Psoas muscle (tissue), 8 donors: ENCODE measurements at regions of chr13 and their contacts with region 1.

Region 1: DNA sequence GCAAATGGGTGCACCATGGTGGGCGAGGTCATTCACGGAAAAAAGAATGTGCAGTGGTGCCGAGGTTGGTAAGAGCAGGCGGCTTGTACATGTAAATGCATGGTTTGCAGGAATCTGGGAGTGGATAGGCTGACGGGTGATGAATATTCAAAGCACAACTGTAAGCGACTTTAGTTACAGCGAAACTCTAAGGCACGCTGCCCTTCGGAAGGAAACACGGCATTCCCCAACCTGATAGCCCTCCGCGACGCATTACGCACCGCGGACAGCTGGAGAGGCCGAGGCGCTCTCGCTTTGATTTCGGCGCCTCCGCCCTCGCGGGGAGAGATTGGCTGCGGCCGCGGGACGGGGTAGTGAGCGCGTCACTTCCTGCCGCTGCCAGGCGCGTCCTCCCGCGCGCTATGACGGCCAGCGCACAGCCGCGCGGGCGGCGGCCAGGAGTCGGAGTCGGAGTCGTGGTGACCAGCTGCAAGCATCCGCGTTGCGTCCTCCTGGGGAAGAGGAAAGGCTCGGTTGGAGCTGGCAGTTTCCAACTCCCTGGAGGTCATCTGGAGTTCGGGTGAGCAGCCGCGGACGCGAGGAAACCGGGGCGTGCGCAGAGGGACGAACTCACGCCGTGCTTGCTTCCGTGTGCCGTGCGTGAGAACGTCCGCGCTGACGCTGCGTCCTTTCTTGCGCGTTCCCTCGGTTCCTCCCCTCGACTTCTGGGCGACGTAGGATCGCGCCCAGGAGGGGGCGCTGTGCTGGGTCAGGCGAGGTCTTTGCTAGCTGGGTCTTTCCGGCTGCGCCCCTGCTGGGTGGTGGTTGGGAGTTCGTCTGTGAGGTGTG is at the start of gene NUDT15:
- DNase-seq: peak; percentile 93 to 97
- ATAC-seq: peak; percentile 98
- H3K4me3 ChIP-seq: peak within 1 kb of the TSS; percentile 84
- H3K27ac ChIP-seq: peak within 1 kb of the TSS; percentile 99
- H3K4me1 ChIP-seq: peaks cover 15% of the 10 kb centered on the region
- H3K27me3 ChIP-seq: no peaks in the 10 kb centered on the region
- CTCF ChIP-seq: peak; percentile 98
- total RNA-seq, gene NUDT15: 8.7 to 12.0 (median 9.3) TPM

Region 2: GRCh38 chr13:48000778-48001628 is 36.6 kb before region 1 on chr13 and contains the start of gene SUCLA2:
- intact Hi-C with region 1: loop called in 1 of 2 experiments (anchors 5 kb)
- DNase-seq: peak; percentile 94 to 95
- ATAC-seq: peak; percentile 99 to 100 (median 100)
- H3K4me3 ChIP-seq: peak within 1 kb of the TSS; percentile 97
- H3K27ac ChIP-seq: peak within 1 kb of the TSS; percentile 91
- H3K4me1 ChIP-seq: peaks cover 4% of the 10 kb centered on the region
- H3K27me3 ChIP-seq: no peaks in the 10 kb centered on the region
- CTCF ChIP-seq: no peak
- total RNA-seq, gene SUCLA2: 96.7 to 111 (median 103) TPM

Region 3: DNA sequence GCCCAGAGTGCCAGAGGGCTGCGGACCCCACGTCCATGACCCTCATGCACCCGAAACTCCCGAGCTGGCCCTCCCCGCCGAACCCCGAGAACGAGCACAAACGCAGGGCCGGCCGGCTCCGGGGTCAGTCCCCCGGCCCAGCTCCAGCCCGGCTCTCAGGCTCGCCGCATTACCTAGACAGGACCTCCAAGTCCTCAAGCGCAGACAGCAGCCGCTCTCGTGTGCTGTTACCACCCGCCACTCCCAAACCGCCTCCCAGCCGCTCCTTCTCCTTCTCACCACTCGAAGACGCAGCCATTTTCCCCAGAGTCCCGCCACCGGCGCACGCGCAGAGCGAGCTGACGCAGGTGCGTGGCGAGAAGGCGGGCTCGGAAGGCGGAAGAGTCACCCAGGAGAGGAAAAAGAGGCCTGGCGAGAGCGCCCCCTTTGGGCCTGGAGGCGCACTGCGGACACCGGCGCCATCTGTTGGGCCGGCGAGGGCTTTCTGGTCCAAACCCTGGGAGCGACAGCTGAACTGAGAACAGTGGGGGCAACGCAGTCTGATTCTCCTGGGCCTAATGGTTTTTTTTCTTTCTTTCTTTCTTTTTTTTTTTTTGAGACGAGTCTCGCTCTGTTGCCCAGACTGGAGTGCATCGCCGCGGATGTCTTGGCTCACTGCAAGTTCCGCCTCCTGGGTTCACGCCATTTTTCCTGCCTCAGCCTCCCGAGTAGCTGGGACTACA is 57.4 kb after region 1 on chr13 and contains the start of gene MED4:
- intact Hi-C with region 1: loop called (anchors 2 to 5 kb)
- DNase-seq: peak; percentile 96 to 98
- ATAC-seq: peak; percentile 99 to 100 (median 99)
- H3K4me3 ChIP-seq: peak within 1 kb of the TSS; percentile 85
- H3K27ac ChIP-seq: peak within 1 kb of the TSS; percentile 89
- H3K4me1 ChIP-seq: peaks cover 43% of the 10 kb centered on the region
- H3K27me3 ChIP-seq: no peaks in the 10 kb centered on the region
- CTCF ChIP-seq: peak; percentile 100
- total RNA-seq, gene MED4: 41.3 to 58.6 (median 44.9) TPM